Heart left ventricle (tissue), 16 donors: ENCODE measurements at regions of chr3 and their contacts with region 1.

Region 1: GRCh38 chr3:137692803-137693431 is 71.2 kb upstream of the SOX14 start:
- DNase-seq: peak in 1 of 5 donors; percentile 25
- ATAC-seq: no peak
- H3K4me3 ChIP-seq: no peak overlapping the region
- H3K27ac ChIP-seq: no peak overlapping the region
- H3K4me1 ChIP-seq: no peaks in the 10 kb centered on the region
- H3K27me3 ChIP-seq: no peaks in the 10 kb centered on the region
- CTCF ChIP-seq: peak in 11 of 12 donors; percentile 15 to 44 (median 27)
- POLR2A ChIP-seq: no peak

Region 2: GRCh38 chr3:137121704-137122314 is 571.1 kb before region 1 on chr3:
- intact Hi-C with region 1: loop called in 1 of 10 experiments (anchors 10 kb)
- DNase-seq: peak in 2 of 5 donors; percentile 27 to 34
- ATAC-seq: peak in 1 of 4 donors; percentile 38
- H3K4me3 ChIP-seq: no peak overlapping the region
- H3K27ac ChIP-seq: no peak overlapping the region
- H3K4me1 ChIP-seq: no peaks in the 10 kb centered on the region
- H3K27me3 ChIP-seq: peaks cover 0 to 16% (median 0%) of the 10 kb centered on the region in 9 donors
- CTCF ChIP-seq: peak; percentile 20 to 60 (median 44)
- POLR2A ChIP-seq: no peak